ENCODE measurements at regions of chr11 and their contacts with region 1.

Region 1: GRCh38 chr11:106076919-106077608 is at the start of gene KBTBD3:
- DNase-seq: peak; percentile 99
- ATAC-seq: peak; percentile 98
- total RNA-seq, gene KBTBD3: 12.1 TPM

Region 2: GRCh38 chr11:106021967-106022794 is 54.9 kb before region 1 on chr11 and contains the start of gene MSANTD4:
- intact Hi-C with region 1: loop called (anchors 1 kb)
- DNase-seq: peak; percentile 99
- ATAC-seq: peak; percentile 99
- total RNA-seq, gene MSANTD4: 19.2 TPM

Measured in Right ventricle myocardium inferior (tissue), 1 donor.